Common myeloid progenitor, CD34-positive (primary cell): ENCODE measurements at regions of chr11 and their contacts with region 1.

Region 1: GRCh38 chr11:118198370-118198769 is 21.9 kb upstream of the SCN2B start:
- DNase-seq: peak; percentile 73 to 81 (median 73)
- H3K4me3 ChIP-seq: peak overlapping the region in 3 of 7 experiments; percentile 24 to 58 (median 38)
- H3K27ac ChIP-seq: no peak overlapping the region
- H3K4me1 ChIP-seq: peaks cover 0 to 23% (median 16%) of the 10 kb centered on the region in 4 experiments
- H3K27me3 ChIP-seq: no peaks in the 10 kb centered on the region

Region 2: GRCh38 chr11:118180300-118180703 is 18.1 kb before region 1 on chr11:
- CTCF ChIA-PET with region 1: interaction called, 12 read pairs
- POLR2A ChIA-PET with region 1: no interaction called
- DNase-seq: peak; percentile 70 to 82 (median 80)
- H3K4me3 ChIP-seq: peak overlapping the region in 2 of 7 experiments; percentile 32 to 42
- H3K27ac ChIP-seq: no peak overlapping the region
- H3K4me1 ChIP-seq: peaks cover 0 to 22% (median 9%) of the 10 kb centered on the region in 4 experiments
- H3K27me3 ChIP-seq: no peaks in the 10 kb centered on the region

Region 3: GRCh38 chr11:118216621-118217481 is 18.5 kb after region 1 on chr11:
- CTCF ChIA-PET with region 1: interaction called, 18 read pairs
- POLR2A ChIA-PET with region 1: no interaction called
- DNase-seq: peak in 2 of 3 donors; percentile 54 to 64
- H3K4me3 ChIP-seq: peak overlapping the region in 3 of 7 experiments; percentile 10 to 35 (median 26)
- H3K27ac ChIP-seq: no peak overlapping the region
- H3K4me1 ChIP-seq: peaks cover 41 to 88% (median 80%) of the 10 kb centered on the region in 4 experiments
- H3K27me3 ChIP-seq: no peaks in the 10 kb centered on the region

Region 4: DNA sequence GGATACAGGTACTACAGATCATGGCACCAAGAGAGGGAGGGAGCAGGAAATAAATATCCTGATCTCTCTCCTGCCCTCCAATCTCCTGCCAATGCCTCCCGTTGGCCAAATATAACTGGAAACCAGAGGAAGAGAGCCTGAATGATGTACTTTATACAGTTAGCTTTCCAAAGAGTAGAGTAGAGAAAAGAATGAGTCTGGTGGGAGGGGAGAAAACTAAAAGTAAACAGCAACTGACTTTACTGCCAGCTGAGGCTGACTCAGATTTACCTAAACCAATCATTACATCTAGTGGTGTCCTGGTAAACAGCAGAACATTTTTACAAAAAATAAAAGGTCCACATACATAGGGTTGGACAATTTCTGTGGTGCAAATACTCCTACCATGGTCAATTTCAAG is 48.7 kb after region 1 on chr11:
- CTCF ChIA-PET with region 1: interaction called, 18 read pairs
- POLR2A ChIA-PET with region 1: interaction called, 7 read pairs
- DNase-seq: peak in 1 of 3 donors; percentile 33
- H3K4me3 ChIP-seq: no peak overlapping the region
- H3K27ac ChIP-seq: no peak overlapping the region
- H3K4me1 ChIP-seq: peaks cover 11 to 27% (median 17%) of the 10 kb centered on the region in 4 experiments
- H3K27me3 ChIP-seq: no peaks in the 10 kb centered on the region

Region 5: GRCh38 chr11:118263695-118264567 is 65.6 kb after region 1 on chr11 and contains the start of gene MPZL2:
- CTCF ChIA-PET with region 1: interaction called, 19 read pairs
- POLR2A ChIA-PET with region 1: no interaction called
- DNase-seq: peak in 2 of 3 donors; percentile 19 to 31
- H3K4me3 ChIP-seq: peak within 1 kb of the TSS; percentile 3 to 81 (median 65)
- H3K27ac ChIP-seq: no peak within 1 kb of the TSS
- H3K4me1 ChIP-seq: peaks cover 5 to 24% (median 16%) of the 10 kb centered on the region in 4 experiments
- H3K27me3 ChIP-seq: no peaks in the 10 kb centered on the region

Region 6: DNA sequence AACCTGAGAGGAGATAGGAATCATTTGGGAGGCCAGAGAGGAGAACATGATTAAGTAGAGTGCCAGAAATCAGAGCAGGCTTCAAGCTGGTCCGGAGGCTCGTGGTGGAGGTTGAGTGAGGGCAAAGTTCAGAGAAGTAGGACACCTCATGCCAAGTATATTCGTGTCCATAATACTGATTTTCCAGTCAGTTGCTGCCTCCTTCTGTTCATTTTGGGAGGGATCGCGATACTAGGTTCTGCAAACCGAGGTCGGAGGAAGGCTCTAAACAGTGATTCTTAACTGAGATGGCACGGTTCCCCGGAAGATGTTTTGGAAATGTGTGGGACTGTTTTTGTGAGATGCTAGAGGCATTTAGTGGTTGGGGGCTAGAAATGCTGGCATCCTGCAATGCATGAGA is 92.6 kb after region 1 on chr11:
- CTCF ChIA-PET with region 1: interaction called, 49 read pairs
- POLR2A ChIA-PET with region 1: no interaction called
- DNase-seq: peak; percentile 60 to 69 (median 64)
- H3K4me3 ChIP-seq: no peak overlapping the region
- H3K27ac ChIP-seq: no peak overlapping the region
- H3K4me1 ChIP-seq: peaks cover 0 to 2% (median 0%) of the 10 kb centered on the region in 4 experiments
- H3K27me3 ChIP-seq: no peaks in the 10 kb centered on the region

Region 7: GRCh38 chr11:118353084-118353710 is 154.8 kb after region 1 on chr11:
- CTCF ChIA-PET with region 1: interaction called, 14 read pairs
- POLR2A ChIA-PET with region 1: interaction called, 4 read pairs
- DNase-seq: peak; percentile 41 to 72 (median 59)
- H3K4me3 ChIP-seq: no peak overlapping the region
- H3K27ac ChIP-seq: no peak overlapping the region
- H3K4me1 ChIP-seq: no peaks in the 10 kb centered on the region
- H3K27me3 ChIP-seq: peaks cover 0 to 2% (median 0%) of the 10 kb centered on the region in 5 experiments